ENCODE measurements at regions of chr14 and their contacts with region 1.

Region 1: GRCh38 chr14:96584199-96584906 is 82.2 kb downstream of the PAPOLA start:
- DNase-seq: peak; percentile 70 to 76 (median 74)
- ATAC-seq: peak; percentile 90
- H3K4me3 ChIP-seq: no peak overlapping the region
- H3K27ac ChIP-seq: no peak overlapping the region
- H3K4me1 ChIP-seq: peaks cover 6 to 19% of the 10 kb centered on the region in 2 experiments; a peak in 4 of 5 replicates
- H3K27me3 ChIP-seq: peaks cover 33 to 62% of the 10 kb centered on the region in 2 experiments
- CTCF ChIP-seq: peak; percentile 83 to 98 (median 95)
- EP300 ChIP-seq: no peak
- POLR2A ChIP-seq: no peak
- RAD21 ChIP-seq: peak; percentile 97

Region 2: GRCh38 chr14:95862240-95862639 is 722.1 kb before region 1 on chr14:
- CTCF ChIA-PET with region 1: no interaction called
- POLR2A ChIA-PET with region 1: no interaction called
- in situ Hi-C with region 1: no loop called
- intact Hi-C with region 1: no loop called
- DNase-seq: no peak
- ATAC-seq: no peak
- H3K4me3 ChIP-seq: no peak overlapping the region
- H3K27ac ChIP-seq: no peak overlapping the region
- H3K4me1 ChIP-seq: no peaks in the 10 kb centered on the region
- H3K27me3 ChIP-seq: no peaks in the 10 kb centered on the region
- CTCF ChIP-seq: no peak
- EP300 ChIP-seq: no peak
- POLR2A ChIP-seq: no peak
- RAD21 ChIP-seq: no peak

Region 3: DNA sequence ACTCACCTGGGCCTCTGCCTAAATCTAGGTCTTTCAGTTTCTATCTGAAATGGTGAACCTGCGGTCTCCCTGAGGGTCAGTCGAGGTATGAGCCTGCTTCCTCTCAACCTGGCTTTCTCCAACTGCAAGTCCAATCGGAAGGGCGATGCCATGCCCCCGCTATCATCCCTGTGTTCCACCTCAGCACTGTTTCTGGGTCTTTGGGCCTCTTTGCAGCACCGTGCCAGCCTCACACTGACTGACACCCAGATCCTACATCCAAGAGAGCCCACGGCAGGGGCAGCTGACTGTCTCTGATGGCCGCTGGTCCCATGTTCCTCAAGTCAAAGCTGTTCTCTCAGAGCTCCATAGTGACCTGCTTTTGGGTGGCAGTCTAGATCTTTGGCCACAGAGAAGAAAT is 38.6 kb after region 1 on chr14:
- CTCF ChIA-PET with region 1: no interaction called
- POLR2A ChIA-PET with region 1: no interaction called
- in situ Hi-C with region 1: no loop called
- intact Hi-C with region 1: no loop called
- DNase-seq: no peak
- ATAC-seq: no peak
- H3K4me3 ChIP-seq: no peak overlapping the region
- H3K27ac ChIP-seq: no peak overlapping the region
- H3K4me1 ChIP-seq: peaks cover 4 to 12% of the 10 kb centered on the region in 2 experiments; a peak in 3 of 5 replicates
- H3K27me3 ChIP-seq: peaks cover 44 to 73% of the 10 kb centered on the region in 2 experiments
- CTCF ChIP-seq: no peak
- EP300 ChIP-seq: no peak
- POLR2A ChIP-seq: no peak
- RAD21 ChIP-seq: no peak

Region 4: GRCh38 chr14:96671215-96671614 is 86.9 kb after region 1 on chr14:
- CTCF ChIA-PET with region 1: no interaction called
- POLR2A ChIA-PET with region 1: no interaction called
- in situ Hi-C with region 1: loop called (anchors 5 kb)
- intact Hi-C with region 1: loop called (anchors 5 kb)
- DNase-seq: no peak
- ATAC-seq: no peak
- H3K4me3 ChIP-seq: no peak overlapping the region
- H3K27ac ChIP-seq: no peak overlapping the region
- H3K4me1 ChIP-seq: no peaks in the 10 kb centered on the region
- H3K27me3 ChIP-seq: peaks cover 3 to 13% of the 10 kb centered on the region in 2 experiments; a peak in 2 of 5 replicates
- CTCF ChIP-seq: 0 out of 6 replicates have a peak, but pooled peaks of 1 of the 3 experiments have one; percentile 1
- EP300 ChIP-seq: no peak
- POLR2A ChIP-seq: no peak
- RAD21 ChIP-seq: no peak

Region 5: DNA sequence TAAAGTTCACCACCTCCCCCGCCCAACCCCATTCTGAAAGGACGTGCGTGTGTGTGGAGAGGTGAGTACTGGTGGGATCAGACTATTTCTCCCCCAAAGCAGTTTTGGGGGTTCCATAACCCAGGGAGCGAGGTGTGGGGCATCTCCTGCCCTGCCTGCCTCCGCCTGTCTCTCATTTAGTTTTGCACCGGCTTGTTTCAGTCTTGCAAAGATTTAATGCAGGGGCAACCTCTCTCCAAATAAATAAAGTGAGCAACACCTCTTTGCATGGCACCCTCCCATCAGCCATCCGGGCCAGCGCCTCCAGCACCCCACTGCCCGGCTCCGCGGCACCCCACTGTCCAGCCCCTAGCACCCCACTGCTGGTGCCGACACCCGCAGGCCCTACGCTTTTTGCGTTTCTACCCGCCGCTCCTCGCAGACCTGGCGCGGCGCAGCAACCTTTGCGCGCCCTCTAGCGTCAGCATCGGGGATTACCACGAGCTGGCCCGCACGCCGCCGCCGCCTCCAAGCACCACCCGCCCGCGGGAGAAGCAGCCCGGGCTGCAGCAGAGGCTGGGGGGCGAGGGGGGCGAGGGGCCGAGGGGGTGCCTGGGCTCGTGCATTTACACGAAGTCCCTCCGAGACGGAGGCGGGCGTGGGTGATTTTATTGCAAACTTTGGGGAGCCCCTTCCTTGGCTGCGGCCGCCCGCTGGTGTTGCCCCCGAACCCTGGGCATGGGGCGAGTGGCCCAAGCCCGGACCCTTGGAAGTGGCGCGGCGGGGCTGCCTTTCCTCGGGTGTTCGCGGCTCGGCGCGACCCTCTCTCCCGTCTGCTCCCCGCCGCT is 157.0 kb after region 1 on chr14:
- CTCF ChIA-PET with region 1: interaction called, 11 read pairs
- POLR2A ChIA-PET with region 1: no interaction called
- in situ Hi-C with region 1: loop called (anchors 5 kb)
- intact Hi-C with region 1: loop called (anchors 1 kb)
- DNase-seq: peak; percentile 68 to 79 (median 77)
- ATAC-seq: peak; percentile 94
- H3K4me3 ChIP-seq: no peak overlapping the region
- H3K27ac ChIP-seq: no peak overlapping the region
- H3K4me1 ChIP-seq: peaks cover 0 to 9% of the 10 kb centered on the region in 2 experiments; a peak in 2 of 5 replicates
- H3K27me3 ChIP-seq: peaks cover 54 to 59% of the 10 kb centered on the region in 2 experiments
- CTCF ChIP-seq: peak; percentile 70 to 90 (median 80)
- EP300 ChIP-seq: no peak
- POLR2A ChIP-seq: no peak
- RAD21 ChIP-seq: peak; percentile 81 to 82

Region 6: DNA sequence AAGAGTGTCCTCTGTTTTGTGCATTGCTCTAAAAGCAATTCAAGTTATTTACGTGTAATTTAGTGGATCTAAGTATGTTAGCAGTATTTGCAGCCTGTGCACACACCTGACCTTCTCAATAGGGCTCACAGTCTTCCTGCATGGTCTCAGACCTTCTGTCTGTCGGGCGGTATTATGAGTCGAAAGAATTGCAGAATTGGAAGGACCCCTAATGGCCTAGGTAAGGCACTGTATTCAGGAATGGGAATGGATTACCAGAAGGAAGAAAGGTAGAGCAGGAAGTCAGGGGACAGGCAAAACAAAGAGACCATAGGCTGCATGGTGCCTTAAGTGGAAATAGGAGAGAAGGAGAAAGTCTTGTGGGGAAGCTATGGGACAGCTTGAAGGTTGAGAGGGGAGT is 554.4 kb after region 1 on chr14:
- CTCF ChIA-PET with region 1: no interaction called
- POLR2A ChIA-PET with region 1: interaction called, 3 read pairs
- in situ Hi-C with region 1: no loop called
- intact Hi-C with region 1: loop called (anchors 10 kb)
- DNase-seq: peak in 2 of 4 experiments; percentile 4 to 6
- ATAC-seq: peak; percentile 70
- H3K4me3 ChIP-seq: no peak overlapping the region
- H3K27ac ChIP-seq: no peak overlapping the region
- H3K4me1 ChIP-seq: no peaks in the 10 kb centered on the region
- H3K27me3 ChIP-seq: no peaks in the 10 kb centered on the region; a peak in 1 of 5 replicates
- CTCF ChIP-seq: peak; percentile 21 to 46 (median 23); a peak in 3 of 6 replicates
- EP300 ChIP-seq: no peak
- POLR2A ChIP-seq: no peak
- RAD21 ChIP-seq: peak in 1 of 2 experiments; percentile 40; a peak in 1 of 4 replicates

Region 7: DNA sequence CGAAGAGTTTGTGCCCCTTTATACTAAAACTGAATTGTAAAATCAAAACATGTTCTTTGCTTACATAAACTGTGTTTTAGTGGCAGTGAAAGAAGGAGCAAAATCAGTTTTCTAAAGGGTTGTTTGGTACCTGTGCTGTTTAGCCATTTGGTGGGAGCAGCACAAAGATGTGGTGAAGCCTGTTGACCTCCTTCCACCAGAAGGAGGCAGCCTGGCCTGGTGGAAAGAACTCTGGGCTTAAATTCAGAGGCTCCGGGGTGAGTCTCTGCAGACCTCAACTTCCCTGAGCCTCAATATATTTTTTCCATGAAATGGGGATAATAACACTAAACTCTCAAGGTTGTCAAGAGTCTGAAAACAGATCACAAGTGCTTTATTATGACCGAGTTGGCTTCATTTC is 715.3 kb after region 1 on chr14:
- CTCF ChIA-PET with region 1: no interaction called
- POLR2A ChIA-PET with region 1: no interaction called
- in situ Hi-C with region 1: loop called (anchors 25 kb)
- intact Hi-C with region 1: no loop called
- DNase-seq: no peak
- ATAC-seq: no peak
- H3K4me3 ChIP-seq: no peak overlapping the region
- H3K27ac ChIP-seq: no peak overlapping the region
- H3K4me1 ChIP-seq: no peaks in the 10 kb centered on the region
- H3K27me3 ChIP-seq: no peaks in the 10 kb centered on the region
- CTCF ChIP-seq: no peak
- EP300 ChIP-seq: no peak
- POLR2A ChIP-seq: no peak
- RAD21 ChIP-seq: 0 out of 4 replicates have a peak, but pooled peaks of 1 of the 2 experiments have one; percentile 2

Measured in K562 (cell line).